Breast epithelium (tissue), 4 donors: ENCODE measurements at regions of chr11 and their contacts with region 1.

Region 1: GRCh38 chr11:34051349-34052035 is at the start of gene CAPRIN1:
- DNase-seq: peak; percentile 73 to 83
- H3K4me3 ChIP-seq: peak within 1 kb of the TSS; percentile 79 to 99 (median 88)
- H3K27ac ChIP-seq: peak within 1 kb of the TSS; percentile 98 to 100
- H3K4me1 ChIP-seq: peaks cover 0 to 3% of the 10 kb centered on the region in 2 donors
- H3K27me3 ChIP-seq: no peaks in the 10 kb centered on the region
- CTCF ChIP-seq: no peak
- POLR2A ChIP-seq: no peak
- total RNA-seq, gene CAPRIN1: 148 to 198 (median 167) TPM

Region 2: GRCh38 chr11:33987975-33988580 is 63.4 kb before region 1 on chr11:
- intact Hi-C with region 1: no loop called
- DNase-seq: peak; percentile 35 to 54
- H3K4me3 ChIP-seq: no peak overlapping the region
- H3K27ac ChIP-seq: no peak overlapping the region
- H3K4me1 ChIP-seq: no peaks in the 10 kb centered on the region
- H3K27me3 ChIP-seq: no peaks in the 10 kb centered on the region
- CTCF ChIP-seq: peak in 2 of 3 donors; percentile 60 to 68
- POLR2A ChIP-seq: no peak

Region 3: GRCh38 chr11:34065505-34066203 is 14.2 kb after region 1 on chr11:
- intact Hi-C with region 1: no loop called
- DNase-seq: no peak
- H3K4me3 ChIP-seq: no peak overlapping the region
- H3K27ac ChIP-seq: no peak overlapping the region
- H3K4me1 ChIP-seq: peaks cover 0 to 5% of the 10 kb centered on the region in 2 donors
- H3K27me3 ChIP-seq: no peaks in the 10 kb centered on the region
- CTCF ChIP-seq: no peak
- POLR2A ChIP-seq: no peak

Region 4: GRCh38 chr11:34105079-34105956 is 53.8 kb after region 1 on chr11 and contains the start of gene NAT10:
- intact Hi-C with region 1: loop called (anchors 1 kb)
- DNase-seq: peak; percentile 93 to 97
- H3K4me3 ChIP-seq: peak within 1 kb of the TSS; percentile 78 to 90 (median 89)
- H3K27ac ChIP-seq: peak within 1 kb of the TSS; percentile 96 to 98
- H3K4me1 ChIP-seq: peaks cover 0 to 6% of the 10 kb centered on the region in 2 donors
- H3K27me3 ChIP-seq: no peaks in the 10 kb centered on the region
- CTCF ChIP-seq: peak in 2 of 3 donors; percentile 12 to 24
- POLR2A ChIP-seq: peak; percentile 81
- total RNA-seq, gene NAT10: 22.6 to 41.0 (median 31.5) TPM